ENCODE measurements at regions of chr10 and their contacts with region 1.

Region 1: DNA sequence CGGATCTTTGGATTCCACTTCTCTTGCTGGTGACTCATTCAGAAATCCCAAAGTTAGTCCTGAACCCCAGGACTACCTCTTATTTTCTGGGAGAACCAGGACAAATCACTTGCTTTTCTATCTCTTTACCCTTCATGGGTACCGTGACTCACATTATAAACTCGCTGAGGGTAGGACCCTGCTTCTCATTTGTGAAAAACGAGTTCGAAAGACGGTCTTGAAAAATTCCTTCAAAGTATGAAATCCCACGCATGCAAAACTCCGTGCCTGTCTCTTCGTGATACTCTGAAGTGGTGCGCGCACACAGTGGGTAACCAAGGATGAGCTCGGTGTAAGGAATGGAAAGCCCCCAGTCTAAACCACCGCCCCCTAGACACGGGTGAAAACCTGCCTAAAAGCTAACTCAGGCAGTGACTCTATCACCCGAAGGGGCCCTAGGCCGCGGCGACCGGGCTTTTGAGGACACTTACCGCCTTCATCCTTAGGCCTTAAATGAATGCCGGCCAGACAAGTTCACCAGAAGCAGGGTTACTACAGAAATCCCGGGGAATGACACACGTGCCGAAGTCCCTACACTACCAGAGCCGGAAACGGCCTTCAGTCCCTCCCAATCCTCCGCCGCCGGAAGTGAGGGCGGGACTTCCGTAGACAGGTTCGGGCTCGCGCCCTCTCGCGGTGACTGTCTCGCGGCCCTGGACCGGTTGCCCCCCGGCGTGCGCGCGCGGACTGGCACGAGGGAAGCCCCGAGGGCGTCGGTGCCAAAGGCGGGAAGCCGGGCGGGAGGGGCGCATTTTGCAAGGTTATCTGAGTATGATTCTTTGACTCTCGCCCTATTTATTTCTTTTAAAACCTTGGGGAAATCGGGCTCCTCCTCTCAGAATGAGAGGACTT is at the start of gene NOC3L:
- DNase-seq: peak; percentile 94 to 99 (median 97)

Region 2: GRCh38 chr10:94287336-94287735 is 75.3 kb before region 1 on chr10:
- intact Hi-C with region 1: no loop called
- DNase-seq: no peak

Region 3: DNA sequence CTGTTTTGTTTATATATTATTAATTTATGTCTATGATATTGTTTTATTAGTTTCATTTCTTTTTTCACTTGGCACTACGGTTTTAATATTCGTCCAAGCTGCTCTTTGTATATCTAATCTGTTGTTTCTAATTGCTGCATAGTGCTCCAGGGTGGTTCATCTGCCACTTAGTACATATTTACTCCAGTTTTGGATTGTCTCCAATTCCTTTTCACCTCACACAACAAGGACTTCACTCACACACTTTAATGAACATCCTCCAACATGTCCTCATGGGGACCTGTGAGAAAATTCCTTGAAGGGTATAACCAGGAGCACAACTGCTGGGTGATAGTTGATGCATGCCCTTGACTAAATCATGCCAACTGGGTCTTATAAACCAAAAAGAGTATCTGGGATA is 14.3 kb after region 1 on chr10:
- intact Hi-C with region 1: no loop called
- DNase-seq: no peak

Region 4: DNA sequence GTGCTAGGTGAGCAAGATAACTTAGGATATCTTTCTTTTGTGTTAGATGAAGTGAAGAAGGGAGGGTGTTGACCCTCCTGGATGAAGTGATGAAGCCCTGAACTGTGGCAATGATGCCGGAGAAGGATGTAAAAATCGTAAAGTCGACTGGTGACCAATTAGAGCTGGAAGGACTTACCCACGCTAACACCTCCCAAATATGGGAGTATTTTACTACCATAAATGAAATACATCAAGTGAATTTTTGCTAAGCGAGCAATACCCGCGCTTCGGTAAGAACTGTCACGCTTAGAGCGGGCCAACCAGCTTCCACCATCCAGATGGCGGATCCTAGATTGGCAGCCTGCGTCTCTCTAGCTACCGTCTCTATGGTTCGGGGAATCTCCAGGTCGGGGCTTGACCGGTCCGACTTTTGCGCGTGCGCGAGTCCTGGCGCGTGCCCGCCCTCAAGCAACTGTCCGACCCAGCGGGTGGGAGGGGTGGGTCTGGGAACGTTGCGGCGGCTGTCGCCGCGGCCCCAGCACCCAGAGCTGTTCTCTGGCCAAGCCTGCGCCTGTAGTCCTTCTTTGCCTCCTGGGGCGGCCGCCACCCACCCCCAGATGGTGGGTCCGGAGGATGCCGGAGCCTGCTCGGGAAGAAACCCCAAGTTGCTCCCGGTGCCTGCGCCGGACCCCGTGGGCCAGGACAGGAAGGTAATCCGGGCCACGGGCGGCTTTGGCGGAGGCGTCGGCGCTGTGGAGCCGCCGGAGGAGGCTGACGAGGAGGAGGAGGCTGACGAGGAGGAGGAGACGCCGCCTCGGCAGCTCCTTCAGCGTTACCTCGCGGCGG is 39.6 kb after region 1 on chr10 and contains the start of gene TBC1D12:
- intact Hi-C with region 1: loop called (anchors 2 kb)
- DNase-seq: peak; percentile 92 to 98 (median 96)

Region 5: DNA sequence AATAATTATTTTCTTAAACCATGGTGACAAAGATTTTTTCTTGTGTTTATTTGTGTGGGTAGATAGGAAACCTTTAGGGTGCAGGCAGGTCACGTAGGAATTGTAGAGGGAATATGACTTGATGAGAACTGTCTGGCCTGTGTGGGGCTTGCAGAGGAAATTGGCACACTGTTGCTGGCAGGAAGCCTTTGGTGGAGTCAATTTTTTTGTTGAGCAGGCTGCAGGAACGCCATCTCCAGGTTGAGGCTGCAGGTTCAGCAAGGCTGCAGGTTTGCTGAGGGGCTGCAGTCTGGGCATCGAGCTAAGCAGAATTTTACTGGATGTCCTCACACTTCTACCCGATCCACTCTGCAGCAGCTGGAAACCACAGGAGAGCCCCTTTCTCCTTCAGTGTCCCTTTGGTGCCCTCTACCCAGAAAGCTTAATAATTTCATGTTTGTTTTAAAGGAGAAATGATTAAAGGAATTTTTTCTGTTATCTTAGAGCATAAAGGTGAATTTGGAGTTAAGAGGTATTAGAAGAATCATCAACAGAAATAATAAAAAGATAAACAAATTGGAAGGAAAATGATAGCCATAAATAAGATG is 76.8 kb after region 1 on chr10:
- intact Hi-C with region 1: loop called (anchors 5 kb)
- DNase-seq: peak in 4 of 42 donors; percentile 9 to 45 (median 15)

Measured in head of caudate nucleus (tissue), 42 donors.